Breast epithelium (tissue), 4 donors: ENCODE measurements at regions of chr4 and their contacts with region 1.

Region 1: DNA sequence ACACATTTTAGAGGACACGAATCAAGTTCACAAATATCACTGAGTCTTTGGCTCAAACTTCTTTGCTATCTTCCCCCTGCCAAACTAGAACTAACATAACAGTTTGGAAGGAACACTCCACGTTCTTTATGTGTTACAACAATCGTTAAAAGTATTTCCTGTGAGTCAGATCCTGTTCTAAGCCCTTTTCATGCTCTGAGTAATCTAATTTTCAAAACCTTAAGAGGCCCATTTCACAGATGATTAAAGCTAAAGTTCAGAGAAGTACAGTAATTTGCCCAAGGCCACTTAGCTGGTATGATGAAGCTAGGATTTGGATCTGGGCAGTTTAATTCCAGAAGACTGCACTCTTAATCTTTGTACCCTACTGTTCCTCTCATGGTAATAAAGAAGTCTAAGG is 854.4 kb upstream of the INTU start:
- DNase-seq: no peak
- H3K4me3 ChIP-seq: no peak overlapping the region
- H3K27ac ChIP-seq: no peak overlapping the region
- H3K4me1 ChIP-seq: no peaks in the 10 kb centered on the region
- H3K27me3 ChIP-seq: no peaks in the 10 kb centered on the region
- CTCF ChIP-seq: no peak
- POLR2A ChIP-seq: no peak

Region 2: GRCh38 chr4:127889903-127890302 is 1111.6 kb after region 1 on chr4:
- intact Hi-C with region 1: loop called (anchors 10 kb)
- DNase-seq: no peak
- H3K4me3 ChIP-seq: no peak overlapping the region
- H3K27ac ChIP-seq: no peak overlapping the region
- H3K4me1 ChIP-seq: no peaks in the 10 kb centered on the region
- H3K27me3 ChIP-seq: no peaks in the 10 kb centered on the region
- CTCF ChIP-seq: no peak
- POLR2A ChIP-seq: no peak